Activated CD8-positive, alpha-beta memory T cell treated with anti-CD3 and anti-CD28 coated beads, Interleukin-2, amount 10 ng/mL, durations not matched to agents 7 days and 5 days (primary cell): ENCODE measurements at regions of chr19 and their contacts with region 1.

Region 1: GRCh38 chr19:41859618-41860418 is at the start of gene RPS19:
- DNase-seq: peak; percentile 99
- ATAC-seq: peak; percentile 87
- H3K4me3 Mint-ChIP-seq: peak within 1 kb of the TSS; percentile 87
- H3K27ac Mint-ChIP-seq: peak within 1 kb of the TSS; percentile 94
- H3K4me1 Mint-ChIP-seq: peaks cover 46% of the 10 kb centered on the region
- H3K27me3 Mint-ChIP-seq: peaks cover 2% of the 10 kb centered on the region
- total RNA-seq, gene RPS19: 3,135 to 3,310 TPM

Region 2: GRCh38 chr19:41872775-41873647 is 13.2 kb after region 1 on chr19:
- CTCF ChIA-PET with region 1: interaction called, 83 read pairs
- DNase-seq: peak; percentile 81
- ATAC-seq: no peak
- H3K4me3 Mint-ChIP-seq: no peak overlapping the region
- H3K27ac Mint-ChIP-seq: peak overlapping the region; percentile 93
- H3K4me1 Mint-ChIP-seq: peaks cover 85% of the 10 kb centered on the region
- H3K27me3 Mint-ChIP-seq: no peaks in the 10 kb centered on the region

Region 3: DNA sequence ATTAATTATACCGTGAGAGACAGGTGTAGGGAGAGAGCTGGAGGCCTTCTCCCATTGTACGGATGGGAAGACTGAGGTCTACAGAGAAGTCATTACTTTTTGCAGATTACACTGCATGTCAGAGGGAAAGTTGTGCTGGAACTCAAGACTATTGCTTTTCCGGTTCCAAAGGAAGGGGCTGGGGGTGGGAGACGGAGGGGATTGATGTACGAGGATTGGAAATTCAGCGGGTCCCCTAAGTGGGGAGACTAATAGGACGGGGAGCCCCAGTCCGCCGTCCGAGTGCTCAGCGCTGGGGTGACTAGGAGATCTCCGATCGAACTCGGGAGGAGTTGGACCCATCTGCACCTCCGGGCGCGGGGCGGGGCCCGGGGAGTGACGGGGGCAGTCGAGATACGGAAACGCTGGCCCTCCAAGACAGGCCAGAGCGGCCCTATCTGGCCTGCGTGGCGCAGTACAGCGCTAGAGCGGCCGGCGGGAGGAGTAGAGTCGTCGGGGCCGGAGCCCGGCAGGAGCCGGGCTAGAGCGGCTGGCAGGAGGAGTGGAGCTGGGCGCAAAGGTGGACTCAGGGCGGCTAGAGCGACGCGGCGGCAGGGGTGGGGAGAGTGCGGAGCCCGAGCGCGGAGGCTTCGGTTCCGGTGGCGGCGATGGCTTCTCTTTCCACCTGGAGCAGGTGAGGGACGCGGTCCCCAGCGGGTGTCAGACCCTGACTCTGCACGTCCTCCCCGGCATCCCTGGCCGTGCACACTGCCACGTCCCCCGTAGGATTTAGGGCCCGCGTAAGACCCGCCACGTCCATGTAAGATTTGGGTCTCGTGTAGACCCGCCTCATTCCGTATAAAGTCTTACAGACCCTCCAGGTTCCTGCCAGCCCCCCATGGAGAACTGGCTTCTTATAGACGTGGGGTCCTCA is 24.3 kb after region 1 on chr19:
- CTCF ChIA-PET with region 1: interaction called, 260 read pairs
- DNase-seq: peak; percentile 97
- ATAC-seq: peak; percentile 81
- H3K4me3 Mint-ChIP-seq: peak overlapping the region; percentile 82
- H3K27ac Mint-ChIP-seq: peak overlapping the region; percentile 94
- H3K4me1 Mint-ChIP-seq: peaks cover 41% of the 10 kb centered on the region
- H3K27me3 Mint-ChIP-seq: no peaks in the 10 kb centered on the region

Region 4: GRCh38 chr19:41934849-41935374 is 75.1 kb after region 1 on chr19:
- CTCF ChIA-PET with region 1: interaction called, 12 read pairs
- DNase-seq: peak; percentile 84
- ATAC-seq: peak; percentile 79
- H3K4me3 Mint-ChIP-seq: no peak overlapping the region
- H3K27ac Mint-ChIP-seq: peak overlapping the region; percentile 44
- H3K4me1 Mint-ChIP-seq: peaks cover 33% of the 10 kb centered on the region
- H3K27me3 Mint-ChIP-seq: peaks cover 42% of the 10 kb centered on the region

Region 5: GRCh38 chr19:41945135-41945766 is 85.4 kb after region 1 on chr19:
- CTCF ChIA-PET with region 1: interaction called, 43 read pairs
- DNase-seq: peak; percentile 97
- ATAC-seq: peak; percentile 88
- H3K4me3 Mint-ChIP-seq: peak overlapping the region; percentile 43
- H3K27ac Mint-ChIP-seq: peak overlapping the region; percentile 91
- H3K4me1 Mint-ChIP-seq: peaks cover 52% of the 10 kb centered on the region
- H3K27me3 Mint-ChIP-seq: peaks cover 17% of the 10 kb centered on the region

Region 6: DNA sequence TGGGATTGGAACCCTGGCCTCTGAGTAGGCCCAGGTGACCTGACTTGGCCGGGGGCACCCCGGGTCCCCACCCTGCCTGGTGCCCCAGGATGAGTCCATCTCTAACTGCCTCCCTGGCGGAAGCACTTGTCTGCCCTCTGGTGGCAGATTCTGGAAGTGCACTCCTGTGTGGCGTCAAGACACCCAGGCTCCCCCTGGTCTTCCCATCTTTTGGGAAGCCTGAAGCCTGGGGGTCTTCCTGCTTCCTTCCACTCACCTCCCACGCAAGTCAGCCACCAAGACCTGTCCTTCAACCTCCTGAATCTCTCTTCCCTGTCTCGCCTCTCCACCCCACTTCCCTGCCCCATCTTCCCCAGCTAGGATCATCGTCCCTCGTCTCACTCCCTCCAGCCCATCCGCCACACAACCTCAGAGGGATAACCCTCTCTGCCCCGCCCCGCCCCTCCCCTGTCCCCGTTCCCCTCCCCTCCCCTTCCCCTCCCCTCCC is 91.9 kb after region 1 on chr19:
- CTCF ChIA-PET with region 1: interaction called, 43 read pairs
- DNase-seq: peak; percentile 92
- ATAC-seq: peak; percentile 89
- H3K4me3 Mint-ChIP-seq: no peak overlapping the region
- H3K27ac Mint-ChIP-seq: peak overlapping the region; percentile 21
- H3K4me1 Mint-ChIP-seq: peaks cover 21% of the 10 kb centered on the region
- H3K27me3 Mint-ChIP-seq: peaks cover 2% of the 10 kb centered on the region

Region 7: DNA sequence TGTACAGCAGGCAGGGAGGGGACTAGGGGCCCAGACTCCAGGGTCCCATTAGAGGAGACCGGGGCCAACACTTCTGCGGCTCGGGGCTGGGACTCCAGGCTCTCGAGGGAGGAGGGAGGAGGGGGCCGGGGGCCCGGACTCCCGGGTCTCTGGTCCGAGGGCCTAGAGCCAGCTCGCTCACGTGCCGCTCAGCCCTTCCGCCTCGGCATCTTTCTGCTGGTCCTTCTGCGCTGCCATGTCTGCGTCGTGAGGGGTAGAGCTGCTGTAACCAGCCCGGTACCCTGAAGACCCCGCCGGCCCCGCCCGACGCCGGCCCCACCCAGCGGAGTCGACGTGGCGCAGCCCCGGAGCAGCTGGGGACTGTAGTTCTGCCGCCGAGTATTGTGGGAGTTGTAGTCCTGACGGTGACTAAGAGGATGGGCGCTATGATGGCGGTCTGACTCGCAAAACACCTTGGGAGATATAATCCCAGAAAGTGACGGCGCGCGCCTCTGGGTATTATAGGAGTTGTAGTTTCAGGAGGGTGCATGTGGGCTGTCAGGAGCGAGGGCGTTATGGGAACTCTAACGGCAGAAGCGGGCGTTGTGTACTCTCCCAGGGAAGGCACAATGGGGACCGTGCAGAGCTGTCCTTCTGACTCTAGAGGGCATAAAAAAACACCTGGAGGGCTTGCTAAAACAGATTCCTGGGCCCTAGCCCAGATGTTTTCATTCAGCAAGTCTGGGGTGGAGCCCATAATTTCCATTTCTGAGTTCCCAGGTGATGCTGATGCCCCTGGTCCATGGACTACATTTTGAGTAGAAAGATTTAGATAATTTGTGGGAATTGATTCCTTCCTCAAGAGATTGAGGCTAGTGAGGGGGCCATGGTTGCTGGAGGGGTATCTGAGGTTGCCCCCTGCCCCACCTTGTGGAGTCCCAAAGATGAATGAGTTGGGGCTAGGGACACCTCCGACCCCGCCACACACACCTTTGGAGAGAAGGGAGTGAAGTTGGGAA is 99.5 kb after region 1 on chr19 and contains the start of gene RABAC1:
- CTCF ChIA-PET with region 1: interaction called, 32 read pairs
- DNase-seq: peak; percentile 95
- ATAC-seq: peak; percentile 91
- H3K4me3 Mint-ChIP-seq: peak within 1 kb of the TSS; percentile 94
- H3K27ac Mint-ChIP-seq: peak within 1 kb of the TSS; percentile 87
- H3K4me1 Mint-ChIP-seq: peaks cover 19% of the 10 kb centered on the region
- H3K27me3 Mint-ChIP-seq: no peaks in the 10 kb centered on the region
- total RNA-seq, gene RABAC1: 81.3 to 93.9 TPM

Region 8: DNA sequence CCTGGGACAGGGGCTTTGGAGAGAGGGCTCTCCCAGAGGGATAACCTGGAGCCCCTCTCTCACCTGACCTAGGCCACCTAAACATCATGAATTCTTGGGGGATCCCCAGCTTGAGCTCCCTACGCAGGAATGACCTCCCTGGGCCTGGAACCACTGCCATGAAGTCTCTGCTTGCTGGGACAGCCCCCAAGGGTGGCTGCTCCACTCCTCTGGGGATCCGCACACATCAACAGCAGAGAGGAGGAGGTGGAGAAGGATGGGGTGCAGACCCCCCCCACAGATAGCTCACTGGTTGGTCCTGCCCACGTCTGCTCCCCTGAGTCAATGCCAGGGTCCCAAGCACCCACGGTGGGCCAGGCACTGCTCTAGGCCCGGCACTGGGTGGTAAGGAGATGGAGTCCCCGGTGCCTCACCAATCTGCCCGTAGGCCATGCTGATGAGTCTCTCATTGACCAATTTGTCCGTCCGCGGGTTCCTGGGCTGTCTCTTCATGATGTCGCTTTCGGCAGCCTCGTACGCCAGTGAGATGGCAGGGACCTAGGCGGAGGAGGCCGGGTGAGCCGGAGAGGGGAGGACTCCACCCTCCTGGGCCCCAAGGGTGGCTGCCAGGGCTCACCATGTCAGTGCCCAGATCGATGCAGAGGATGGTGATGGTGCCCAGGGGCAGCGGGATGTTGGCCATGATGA is 110.1 kb after region 1 on chr19:
- CTCF ChIA-PET with region 1: no interaction called
- DNase-seq: no peak
- ATAC-seq: no peak
- H3K4me3 Mint-ChIP-seq: no peak overlapping the region
- H3K27ac Mint-ChIP-seq: no peak overlapping the region
- H3K4me1 Mint-ChIP-seq: no peaks in the 10 kb centered on the region
- H3K27me3 Mint-ChIP-seq: no peaks in the 10 kb centered on the region

Region 9: DNA sequence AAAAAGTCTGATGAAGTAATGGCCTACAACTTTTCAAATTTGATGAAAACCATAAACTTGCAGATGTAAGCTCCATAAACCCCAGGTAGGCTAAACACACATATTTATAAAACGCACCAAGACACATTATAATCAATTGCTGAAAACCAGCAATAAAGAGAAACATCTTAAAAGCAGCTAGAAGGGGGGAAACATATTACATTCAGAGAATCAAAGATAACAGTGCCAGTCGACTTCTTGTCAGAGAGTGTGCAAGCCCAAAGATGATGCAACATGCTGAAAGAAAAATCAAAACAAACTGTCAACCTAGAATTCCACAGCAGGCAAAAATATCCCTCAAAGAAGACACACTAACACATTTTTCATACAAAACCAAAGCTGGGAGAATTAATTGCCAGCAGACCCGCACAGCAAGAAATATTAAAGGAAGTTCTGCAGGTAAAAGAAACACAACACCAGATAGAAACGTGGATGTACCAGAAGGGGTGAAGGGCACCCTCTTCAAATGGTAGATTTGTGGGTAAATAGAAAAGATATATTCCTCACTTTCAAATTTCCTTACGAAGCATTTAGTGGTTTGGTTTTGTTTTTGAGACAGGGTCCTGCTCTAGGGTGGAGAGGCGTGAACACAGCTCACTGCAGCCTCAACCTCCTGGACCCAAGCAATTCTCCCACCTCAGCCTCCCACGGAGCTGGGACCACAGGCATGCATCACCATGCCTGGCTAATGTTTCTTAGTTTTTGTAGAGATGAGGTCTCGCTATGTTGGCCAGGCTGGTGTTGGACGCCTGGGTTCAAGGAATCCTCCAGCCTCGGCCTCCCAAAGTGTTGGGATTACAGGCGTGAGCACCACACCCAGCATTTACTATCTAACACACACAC is 150.7 kb after region 1 on chr19:
- CTCF ChIA-PET with region 1: no interaction called
- DNase-seq: no peak
- ATAC-seq: no peak
- H3K4me3 Mint-ChIP-seq: no peak overlapping the region
- H3K27ac Mint-ChIP-seq: no peak overlapping the region
- H3K4me1 Mint-ChIP-seq: no peaks in the 10 kb centered on the region
- H3K27me3 Mint-ChIP-seq: peaks cover 4% of the 10 kb centered on the region